ENCODE measurements at regions of chr1 and their contacts with region 1.

Region 1: DNA sequence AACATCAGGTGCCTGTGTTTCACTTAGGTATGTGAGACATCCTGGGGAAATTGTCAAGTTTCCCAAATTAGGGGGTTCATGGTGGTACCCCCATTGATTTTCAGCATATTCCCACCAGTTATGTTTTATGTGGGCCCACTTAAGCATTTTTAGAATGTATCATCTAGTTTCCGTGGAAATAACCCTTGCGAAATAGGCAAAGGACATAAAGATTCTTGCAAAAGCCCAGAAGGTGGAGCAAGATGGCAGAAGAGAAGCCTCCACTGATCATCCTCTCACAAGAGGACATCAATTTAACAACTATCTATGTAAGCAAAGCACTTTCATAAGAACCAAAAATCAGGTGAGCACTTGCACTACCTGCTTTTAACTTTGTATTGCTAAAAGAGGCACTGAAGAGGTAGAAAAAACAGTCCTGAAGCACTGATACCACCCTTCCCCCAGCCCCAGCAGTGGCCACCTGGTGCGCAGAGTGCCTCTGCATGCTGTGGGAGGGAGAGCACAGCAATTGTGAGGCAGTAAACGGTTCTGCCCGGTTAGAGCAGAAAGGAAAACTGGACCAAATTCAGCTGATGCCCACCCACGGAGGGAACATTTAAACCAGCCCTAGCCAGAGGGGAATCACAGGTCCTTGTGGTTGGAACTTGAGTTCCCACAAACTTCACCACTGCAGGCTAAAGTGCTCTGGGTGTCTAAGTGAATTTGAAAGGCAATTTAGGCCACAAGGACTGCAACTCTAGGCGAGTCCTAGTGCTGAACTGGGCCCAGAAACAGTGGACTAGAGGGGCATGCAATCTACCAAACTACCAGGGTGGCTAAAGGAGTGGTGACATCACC is 23.2 kb downstream of the MCOLN2 start:
- ATAC-seq: no peak
- H3K4me3 ChIP-seq: no peak overlapping the region
- H3K27ac ChIP-seq: no peak overlapping the region
- H3K4me1 ChIP-seq: peaks cover 0 to 4% of the 10 kb centered on the region in 2 donors

Region 2: DNA sequence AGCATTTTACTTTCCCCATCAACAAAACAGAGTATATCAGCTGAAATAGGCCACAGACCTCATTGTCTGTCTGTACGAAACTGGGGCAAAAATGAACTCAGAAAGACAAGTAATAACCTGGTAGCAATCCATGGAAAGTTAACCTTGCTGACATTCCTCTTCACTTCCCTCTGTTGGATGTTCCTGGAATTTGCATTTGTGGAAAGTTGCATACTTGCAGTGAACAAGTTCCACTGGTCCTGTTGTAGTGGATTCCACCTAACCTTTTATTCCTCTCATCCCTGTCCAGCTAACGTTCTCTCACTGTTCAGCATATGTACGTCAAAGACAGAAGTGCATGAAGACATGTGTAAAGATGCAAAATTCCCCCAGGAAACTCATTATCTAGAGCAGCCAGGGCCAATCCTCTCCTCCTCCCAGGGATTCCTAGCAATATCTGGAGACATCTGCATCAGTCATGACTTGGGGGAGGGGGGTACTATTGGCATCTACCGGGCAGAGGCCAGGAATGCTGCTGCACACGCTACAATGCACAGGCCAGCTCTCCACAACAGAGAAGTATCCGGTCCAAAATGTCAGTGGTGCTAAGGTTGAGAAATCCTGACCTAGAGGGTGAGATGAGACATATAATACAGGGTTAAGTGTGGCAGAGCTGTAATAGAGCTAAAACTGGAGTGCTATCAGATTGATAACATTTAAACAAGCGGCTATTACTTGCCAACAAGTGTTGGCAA is 88.9 kb before region 1 on chr1:
- in situ Hi-C with region 1: no loop called
- ATAC-seq: peak in 1 of 8 experiments; percentile 25
- H3K4me3 ChIP-seq: no peak overlapping the region
- H3K27ac ChIP-seq: no peak overlapping the region
- H3K4me1 ChIP-seq: no peaks in the 10 kb centered on the region

Region 3: GRCh38 chr1:85078903-85079302 is 105.2 kb after region 1 on chr1:
- in situ Hi-C with region 1: loop called in 1 of 9 experiments (anchors 25 kb)
- ATAC-seq: peak in 3 of 8 experiments; percentile 47 to 73 (median 57)
- H3K4me3 ChIP-seq: no peak overlapping the region
- H3K27ac ChIP-seq: no peak overlapping the region
- H3K4me1 ChIP-seq: no peaks in the 10 kb centered on the region